AG04450 (cell line): ENCODE measurements at regions of chr21 and their contacts with region 1.

Region 1: DNA sequence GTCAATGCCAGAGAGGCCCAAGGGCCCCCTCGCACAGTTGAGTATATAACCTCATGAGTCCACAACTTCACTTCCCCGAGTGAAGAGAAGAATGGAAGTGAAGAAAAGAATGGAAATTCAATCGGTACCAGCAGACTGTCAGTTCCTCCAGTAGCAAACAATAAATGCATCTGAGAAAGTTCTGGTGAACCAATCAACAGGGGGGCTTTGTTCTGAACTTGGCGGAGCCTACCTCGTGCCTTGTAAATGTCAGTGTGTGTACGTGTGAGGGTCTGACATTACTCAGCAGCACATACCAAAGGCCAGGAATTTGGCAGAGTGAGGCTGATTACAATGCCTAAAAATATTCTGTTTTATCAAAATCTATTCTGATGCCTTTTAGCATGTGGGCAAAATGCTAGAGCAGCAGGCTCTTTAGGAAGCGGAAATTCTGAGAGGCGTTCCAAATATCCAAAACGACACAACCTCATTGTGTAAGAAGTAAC is 238.5 kb downstream of the LTN1 start:
- DNase-seq: peak; percentile 93
- H3K4me3 ChIP-seq: no peak overlapping the region
- H3K27ac ChIP-seq: peak overlapping the region; percentile 95
- H3K27me3 ChIP-seq: no peaks in the 10 kb centered on the region
- CTCF ChIP-seq: no peak

Region 2: GRCh38 chr21:28943631-28944030 is 189.5 kb after region 1 on chr21:
- CTCF ChIA-PET with region 1: interaction called, 11 read pairs
- POLR2A ChIA-PET with region 1: no interaction called
- DNase-seq: no peak
- H3K4me3 ChIP-seq: no peak overlapping the region
- H3K27ac ChIP-seq: no peak overlapping the region
- H3K27me3 ChIP-seq: no peaks in the 10 kb centered on the region
- CTCF ChIP-seq: no peak

Region 3: DNA sequence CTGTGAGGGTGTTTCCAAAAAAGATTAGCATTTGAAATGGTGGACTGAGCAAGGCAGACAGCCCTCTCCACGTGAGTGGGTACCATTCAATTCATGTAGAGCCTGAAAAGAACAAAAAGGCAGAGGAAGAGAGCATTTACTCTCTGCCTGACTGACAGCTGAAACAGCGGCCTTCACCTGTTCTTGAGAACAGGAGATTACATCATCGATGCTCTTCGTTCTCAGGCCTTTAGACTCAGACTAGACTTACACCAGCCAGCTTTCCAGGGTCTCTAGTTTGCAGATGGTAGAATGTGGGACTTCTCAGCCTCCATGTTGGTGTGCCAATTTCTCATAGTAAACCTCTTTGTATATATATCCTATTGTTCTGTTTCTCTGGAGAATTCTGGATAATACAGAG is 846.9 kb after region 1 on chr21:
- CTCF ChIA-PET with region 1: no interaction called
- POLR2A ChIA-PET with region 1: no interaction called
- DNase-seq: no peak
- H3K4me3 ChIP-seq: no peak overlapping the region
- H3K27ac ChIP-seq: no peak overlapping the region
- H3K27me3 ChIP-seq: no peaks in the 10 kb centered on the region
- CTCF ChIP-seq: no peak